K562 (cell line): ENCODE measurements at regions of chr7 and their contacts with region 1.

Region 1: GRCh38 chr7:148110111-148110868 is 480.3 kb upstream of the C7orf33 start:
- DNase-seq: peak in 1 of 4 experiments; percentile 6
- ATAC-seq: peak; percentile 60; the same call in 2 of the 3 replicates
- H3K4me3 ChIP-seq: no peak overlapping the region
- H3K27ac ChIP-seq: no peak overlapping the region
- H3K4me1 ChIP-seq: no peaks in the 10 kb centered on the region
- H3K27me3 ChIP-seq: 0 out of 5 replicates have a peak, but pooled peaks cover 0 to 4% of the 10 kb centered on the region in 2 experiments
- CTCF ChIP-seq: peak; percentile 17 to 27 (median 19); a peak in 3 of 6 replicates
- EP300 ChIP-seq: no peak
- POLR2A ChIP-seq: no peak
- RAD21 ChIP-seq: no peak

Region 2: GRCh38 chr7:148242294-148242801 is 132.1 kb after region 1 on chr7:
- CTCF ChIA-PET with region 1: no interaction called
- POLR2A ChIA-PET with region 1: interaction called, 3 read pairs
- in situ Hi-C with region 1: no loop called
- intact Hi-C with region 1: loop called (anchors 5 kb)
- DNase-seq: peak; percentile 63 to 73 (median 68)
- ATAC-seq: peak; percentile 98
- H3K4me3 ChIP-seq: no peak overlapping the region
- H3K27ac ChIP-seq: no peak overlapping the region
- H3K4me1 ChIP-seq: no peaks in the 10 kb centered on the region
- H3K27me3 ChIP-seq: no peaks in the 10 kb centered on the region
- CTCF ChIP-seq: peak; percentile 74 to 93 (median 92)
- EP300 ChIP-seq: no peak
- POLR2A ChIP-seq: no peak
- RAD21 ChIP-seq: peak; percentile 46 to 86